ENCODE measurements at regions of chr7 and their contacts with region 1.

Region 1: DNA sequence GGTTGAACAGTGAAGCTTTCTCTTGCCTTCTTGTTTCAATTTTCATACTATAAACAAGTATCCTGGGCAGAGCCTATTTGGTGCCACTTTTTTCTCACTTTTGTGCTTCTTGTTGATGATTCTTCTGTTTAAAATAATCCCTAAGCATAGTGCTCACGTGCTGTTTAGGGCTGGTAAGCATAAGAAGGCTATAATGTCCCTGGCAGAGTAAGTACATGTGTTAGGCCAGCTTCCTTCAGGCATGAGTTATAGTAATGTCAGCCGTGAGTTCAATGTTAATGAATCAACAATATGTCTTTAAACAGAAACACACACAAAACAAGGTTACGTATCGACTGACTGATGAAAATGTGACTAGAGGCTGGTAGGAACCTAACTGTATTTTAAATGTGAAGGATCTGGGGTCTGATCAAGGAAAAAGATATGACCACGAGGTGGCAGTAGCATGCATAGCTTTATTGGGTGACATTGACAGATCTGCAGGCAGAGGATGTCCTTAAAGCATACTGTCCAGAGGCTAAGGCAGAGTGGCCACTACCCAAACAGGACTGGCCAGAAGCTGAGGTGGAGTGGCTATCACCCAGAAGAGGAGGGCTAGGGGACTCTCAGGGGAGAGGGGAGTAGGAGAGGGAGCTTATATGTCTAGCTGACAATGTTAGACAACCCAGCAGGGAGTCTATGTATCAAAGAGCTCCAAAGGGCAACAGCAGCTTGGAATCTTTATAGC is 113.7 kb downstream of the BRAF start:
- DNase-seq: peak; percentile 82
- ATAC-seq: peak; percentile 73
- H3K4me3 ChIP-seq: no peak overlapping the region
- H3K4me3 Mint-ChIP-seq: no peak overlapping the region
- H3K27ac ChIP-seq: no peak overlapping the region
- H3K27ac Mint-ChIP-seq: peak overlapping the region; percentile 17
- H3K4me1 ChIP-seq: no peaks in the 10 kb centered on the region
- H3K4me1 Mint-ChIP-seq: peaks cover 1% of the 10 kb centered on the region
- H3K27me3 ChIP-seq: no peaks in the 10 kb centered on the region
- H3K27me3 Mint-ChIP-seq: no peaks in the 10 kb centered on the region
- CTCF ChIP-seq: peak; percentile 82

Region 2: DNA sequence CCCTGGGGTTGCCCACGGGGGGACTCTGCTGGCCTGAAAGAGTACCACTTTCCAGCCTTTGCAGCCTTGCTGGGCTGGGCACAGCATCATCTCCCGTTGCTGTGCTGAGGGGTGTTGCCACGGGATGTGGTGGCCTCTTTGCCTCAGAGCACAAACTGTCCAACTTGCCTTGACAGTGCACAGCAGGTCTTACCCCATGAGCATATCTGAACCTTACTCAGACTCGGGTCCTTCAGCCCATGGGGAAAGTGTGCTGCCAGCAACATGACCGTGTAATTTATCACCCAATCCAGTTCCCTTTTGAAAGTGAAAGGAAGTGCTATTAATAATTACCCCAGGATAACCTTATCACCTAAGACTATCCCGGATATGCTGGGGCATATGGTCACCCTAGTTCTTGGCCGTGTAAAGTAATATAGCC is 935.2 kb before region 1 on chr7:
- CTCF ChIA-PET with region 1: no interaction called
- POLR2A ChIA-PET with region 1: no interaction called
- intact Hi-C with region 1: no loop called
- DNase-seq: no peak
- ATAC-seq: no peak
- H3K4me3 ChIP-seq: no peak overlapping the region
- H3K4me3 Mint-ChIP-seq: no peak overlapping the region
- H3K27ac ChIP-seq: no peak overlapping the region
- H3K27ac Mint-ChIP-seq: no peak overlapping the region
- H3K4me1 ChIP-seq: peaks cover 3 to 4% of the 10 kb centered on the region in 2 donors
- H3K4me1 Mint-ChIP-seq: peaks cover 2% of the 10 kb centered on the region
- H3K27me3 ChIP-seq: no peaks in the 10 kb centered on the region
- H3K27me3 Mint-ChIP-seq: peaks cover 4% of the 10 kb centered on the region
- CTCF ChIP-seq: no peak

Region 3: DNA sequence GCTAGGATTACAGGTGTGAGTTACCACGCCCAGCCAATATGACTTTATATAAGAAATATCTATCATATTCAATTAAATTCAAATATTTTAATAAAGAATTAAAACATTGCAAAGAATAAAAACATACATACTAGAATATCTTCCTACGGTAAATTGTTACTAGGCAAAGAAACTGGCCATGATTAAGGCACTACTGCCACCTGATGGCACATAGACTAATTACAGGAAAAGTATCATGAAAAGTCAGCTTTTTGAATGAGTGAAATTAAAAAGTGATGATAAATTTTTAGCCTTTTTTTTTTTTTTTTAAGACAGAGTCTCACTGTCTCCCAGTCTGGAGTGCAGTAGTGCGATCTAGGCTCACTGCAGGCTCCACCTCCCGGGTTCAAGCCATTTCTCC is 172.8 kb after region 1 on chr7:
- CTCF ChIA-PET with region 1: interaction called, 17 read pairs
- POLR2A ChIA-PET with region 1: no interaction called
- intact Hi-C with region 1: no loop called
- DNase-seq: no peak
- ATAC-seq: no peak
- H3K4me3 ChIP-seq: no peak overlapping the region
- H3K4me3 Mint-ChIP-seq: no peak overlapping the region
- H3K27ac ChIP-seq: no peak overlapping the region
- H3K27ac Mint-ChIP-seq: no peak overlapping the region
- H3K4me1 ChIP-seq: no peaks in the 10 kb centered on the region
- H3K4me1 Mint-ChIP-seq: no peaks in the 10 kb centered on the region
- H3K27me3 ChIP-seq: peaks cover 0 to 12% (median 4%) of the 10 kb centered on the region in 4 experiments
- H3K27me3 Mint-ChIP-seq: peaks cover 26% of the 10 kb centered on the region
- CTCF ChIP-seq: no peak

Region 4: GRCh38 chr7:141003172-141004065 is 192.4 kb after region 1 on chr7:
- CTCF ChIA-PET with region 1: interaction called, 254 read pairs
- POLR2A ChIA-PET with region 1: no interaction called
- intact Hi-C with region 1: no loop called
- DNase-seq: no peak
- ATAC-seq: no peak
- H3K4me3 ChIP-seq: no peak overlapping the region
- H3K4me3 Mint-ChIP-seq: no peak overlapping the region
- H3K27ac ChIP-seq: no peak overlapping the region
- H3K27ac Mint-ChIP-seq: no peak overlapping the region
- H3K4me1 ChIP-seq: no peaks in the 10 kb centered on the region
- H3K4me1 Mint-ChIP-seq: no peaks in the 10 kb centered on the region
- H3K27me3 ChIP-seq: peaks cover 0 to 3% (median 0%) of the 10 kb centered on the region in 4 experiments
- H3K27me3 Mint-ChIP-seq: peaks cover 18% of the 10 kb centered on the region
- CTCF ChIP-seq: no peak